Activated naive CD8-positive, alpha-beta T cell treated with anti-CD3 and anti-CD28 coated beads, Interleukin-2, amount 10 ng/mL, durations not matched to agents 7 days and 5 days (primary cell): ENCODE measurements at regions of chr3 and their contacts with region 1.

Region 1: DNA sequence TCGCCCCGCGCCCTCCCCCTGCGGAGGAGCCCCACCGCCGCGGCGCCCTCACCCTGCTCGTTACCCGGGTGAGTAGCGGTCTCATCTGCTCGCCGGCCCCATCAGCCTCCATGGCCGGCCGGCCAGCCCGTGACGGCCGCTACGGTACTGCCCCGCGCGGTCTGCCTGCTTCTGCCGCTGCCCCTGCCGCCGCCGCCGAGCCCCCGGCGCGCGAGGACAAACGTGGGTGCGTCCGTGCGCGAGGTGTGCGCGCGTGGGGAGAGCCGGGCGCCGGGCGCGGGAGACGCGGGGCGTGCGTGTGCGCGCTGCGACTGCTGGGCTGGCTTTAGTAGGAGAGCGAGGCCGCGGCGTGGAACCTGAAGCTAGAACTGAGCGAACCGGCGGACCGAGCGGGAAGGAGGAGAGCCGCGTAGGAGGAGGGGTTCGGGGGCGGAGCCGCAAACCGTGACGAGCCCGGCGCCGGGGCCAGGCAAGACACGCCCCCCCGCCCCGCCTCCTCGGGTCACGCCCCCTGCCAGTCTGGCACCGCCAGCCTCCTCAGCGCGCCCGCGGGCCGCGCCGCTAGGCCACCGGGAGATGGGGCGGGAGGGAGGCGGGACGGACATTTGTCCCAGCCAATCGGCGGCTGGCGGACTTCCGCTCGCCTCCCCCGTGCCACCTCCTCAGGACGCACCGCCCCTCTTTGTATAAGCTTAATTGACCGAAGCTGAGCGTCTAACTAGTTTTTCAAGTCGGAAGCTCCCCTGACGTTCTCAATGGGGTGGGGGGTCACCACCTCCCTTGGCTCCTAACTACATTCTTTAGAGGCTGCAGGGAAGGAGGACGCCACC is at the start of gene SLC4A7:
- DNase-seq: peak; percentile 99
- ATAC-seq: peak; percentile 93
- H3K4me3 Mint-ChIP-seq: peak within 1 kb of the TSS; percentile 98
- H3K27ac Mint-ChIP-seq: peak within 1 kb of the TSS; percentile 95
- H3K4me1 Mint-ChIP-seq: peaks cover 34% of the 10 kb centered on the region
- H3K27me3 Mint-ChIP-seq: no peaks in the 10 kb centered on the region
- total RNA-seq, gene SLC4A7: 49.5 to 54.1 TPM

Region 2: GRCh38 chr3:27632431-27633223 is 148.4 kb after region 1 on chr3:
- POLR2A ChIA-PET with region 1: interaction called, 11 read pairs
- DNase-seq: peak; percentile 72
- ATAC-seq: peak; percentile 82
- H3K4me3 Mint-ChIP-seq: peak overlapping the region; percentile 81
- H3K27ac Mint-ChIP-seq: peak overlapping the region; percentile 82
- H3K4me1 Mint-ChIP-seq: peaks cover 19% of the 10 kb centered on the region
- H3K27me3 Mint-ChIP-seq: peaks cover 2% of the 10 kb centered on the region